AG04450 (cell line): ENCODE measurements at regions of chr3 and their contacts with region 1.

Region 1: GRCh38 chr3:149442043-149442442 is 32.5 kb upstream of the TM4SF4 start:
- DNase-seq: no peak
- H3K4me3 ChIP-seq: no peak overlapping the region
- H3K27ac ChIP-seq: no peak overlapping the region
- H3K27me3 ChIP-seq: no peaks in the 10 kb centered on the region
- CTCF ChIP-seq: no peak

Region 2: DNA sequence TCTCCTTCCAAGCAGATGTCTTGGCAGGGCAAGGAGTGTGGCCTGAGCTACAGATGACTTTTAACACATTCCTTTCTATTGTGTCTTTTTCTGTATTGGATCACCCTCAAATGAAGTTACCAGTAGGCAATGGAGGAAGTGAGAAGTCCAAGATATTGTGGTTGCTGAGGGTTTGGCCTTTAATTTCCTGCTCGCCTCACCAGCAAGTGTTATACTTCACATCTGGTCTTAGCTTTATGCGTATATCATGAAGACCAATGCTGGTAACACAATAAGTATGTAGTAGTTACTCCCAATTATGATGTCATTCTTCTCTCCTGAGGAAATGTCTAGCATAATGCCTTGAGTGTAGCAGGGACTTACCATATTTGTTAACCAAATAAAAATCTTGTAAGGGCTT is 1853.0 kb before region 1 on chr3:
- CTCF ChIA-PET with region 1: no interaction called
- POLR2A ChIA-PET with region 1: no interaction called
- DNase-seq: no peak
- H3K4me3 ChIP-seq: no peak overlapping the region
- H3K27ac ChIP-seq: no peak overlapping the region
- H3K27me3 ChIP-seq: no peaks in the 10 kb centered on the region
- CTCF ChIP-seq: no peak

Region 3: GRCh38 chr3:149015393-149015792 is 426.6 kb before region 1 on chr3:
- CTCF ChIA-PET with region 1: interaction called, 10 read pairs
- POLR2A ChIA-PET with region 1: no interaction called
- DNase-seq: no peak
- H3K4me3 ChIP-seq: no peak overlapping the region
- H3K27ac ChIP-seq: peak overlapping the region; percentile 42
- H3K27me3 ChIP-seq: no peaks in the 10 kb centered on the region
- CTCF ChIP-seq: no peak

Region 4: DNA sequence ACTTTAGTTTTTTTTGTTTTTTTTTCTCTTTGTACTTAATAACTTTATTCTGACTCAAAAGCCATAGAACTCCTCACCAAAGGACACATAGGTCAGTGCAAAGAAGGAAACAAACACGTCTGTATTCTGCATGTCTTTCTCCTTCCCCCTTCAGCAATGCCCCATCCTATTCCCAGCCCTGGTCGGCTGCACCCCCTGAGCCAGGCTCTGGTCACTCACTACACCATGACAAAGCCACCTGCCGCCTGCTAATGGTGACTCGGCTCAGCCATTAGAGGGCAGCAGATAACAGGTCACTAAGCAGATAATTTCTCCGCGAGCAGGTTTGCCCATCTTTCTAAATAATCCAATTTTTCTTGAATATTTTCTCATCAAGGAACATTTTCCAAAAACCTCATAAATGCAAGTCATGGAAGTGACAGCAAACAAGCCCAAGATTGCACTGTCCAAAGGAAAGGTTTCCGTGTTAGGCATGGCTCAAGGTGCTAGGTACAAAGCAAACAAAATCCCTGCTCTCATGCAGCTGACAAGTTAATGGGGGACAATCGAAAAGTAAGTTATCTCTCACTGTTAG is 70.3 kb after region 1 on chr3:
- CTCF ChIA-PET with region 1: no interaction called
- POLR2A ChIA-PET with region 1: no interaction called
- DNase-seq: no peak
- H3K4me3 ChIP-seq: no peak overlapping the region
- H3K27ac ChIP-seq: no peak overlapping the region
- H3K27me3 ChIP-seq: no peaks in the 10 kb centered on the region
- CTCF ChIP-seq: peak; percentile 79